ENCODE measurements at regions of chr4 and their contacts with region 1.

Region 1: DNA sequence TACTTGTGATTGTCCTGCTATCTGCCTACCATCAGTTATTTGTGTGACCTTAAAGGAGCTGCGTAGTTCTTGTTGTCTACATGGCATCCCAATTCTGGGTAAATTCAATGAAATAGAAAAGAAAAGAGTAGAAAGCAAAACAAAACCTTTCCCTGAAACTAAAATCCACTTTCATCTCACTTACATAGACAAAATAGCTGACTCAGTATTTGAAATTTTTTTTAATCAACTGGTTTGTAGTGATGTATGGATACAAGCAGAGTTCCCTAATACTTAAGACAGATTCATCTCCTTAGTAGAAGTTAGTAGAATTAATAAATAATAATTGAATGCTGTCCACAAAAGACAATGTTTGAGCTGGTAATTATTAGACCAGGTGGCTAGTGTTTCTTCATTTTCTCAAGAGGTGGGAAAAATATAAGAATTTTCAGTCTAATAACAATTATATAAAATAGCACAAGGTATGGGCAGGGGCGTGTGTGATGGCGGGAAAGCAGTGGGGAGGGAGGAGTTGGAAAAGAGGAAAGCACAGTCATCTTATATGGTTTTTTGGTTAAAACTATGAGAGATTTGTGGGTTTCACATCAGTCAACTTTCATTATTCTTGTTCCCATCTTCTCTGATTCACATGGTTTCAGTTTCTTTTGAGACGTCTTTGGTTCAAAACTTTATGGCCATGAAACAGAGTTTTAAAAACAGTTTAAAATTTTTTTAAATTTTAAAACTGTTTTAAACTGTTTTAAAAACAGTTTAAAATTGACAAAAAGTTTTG is 275.2 kb downstream of the SPRY1 start:
- DNase-seq: no peak
- ATAC-seq: no peak
- H3K4me3 ChIP-seq: peak overlapping the region in 1 of 10 donors; percentile 10
- H3K27ac ChIP-seq: no peak overlapping the region
- H3K4me1 ChIP-seq: peaks cover 0 to 6% (median 0%) of the 10 kb centered on the region in 9 donors
- H3K27me3 ChIP-seq: no peaks in the 10 kb centered on the region
- CTCF ChIP-seq: no peak

Region 2: GRCh38 chr4:123631786-123632692 is 39.8 kb before region 1 on chr4:
- intact Hi-C with region 1: no loop called
- DNase-seq: no peak
- ATAC-seq: no peak
- H3K4me3 ChIP-seq: no peak overlapping the region
- H3K27ac ChIP-seq: no peak overlapping the region
- H3K4me1 ChIP-seq: peaks cover 0 to 10% (median 0%) of the 10 kb centered on the region in 9 donors
- H3K27me3 ChIP-seq: no peaks in the 10 kb centered on the region
- CTCF ChIP-seq: no peak

Region 3: GRCh38 chr4:123767806-123768205 is 96.0 kb after region 1 on chr4:
- intact Hi-C with region 1: no loop called
- DNase-seq: no peak
- ATAC-seq: no peak
- H3K4me3 ChIP-seq: no peak overlapping the region
- H3K27ac ChIP-seq: no peak overlapping the region
- H3K4me1 ChIP-seq: no peaks in the 10 kb centered on the region
- H3K27me3 ChIP-seq: no peaks in the 10 kb centered on the region
- CTCF ChIP-seq: no peak

Region 4: DNA sequence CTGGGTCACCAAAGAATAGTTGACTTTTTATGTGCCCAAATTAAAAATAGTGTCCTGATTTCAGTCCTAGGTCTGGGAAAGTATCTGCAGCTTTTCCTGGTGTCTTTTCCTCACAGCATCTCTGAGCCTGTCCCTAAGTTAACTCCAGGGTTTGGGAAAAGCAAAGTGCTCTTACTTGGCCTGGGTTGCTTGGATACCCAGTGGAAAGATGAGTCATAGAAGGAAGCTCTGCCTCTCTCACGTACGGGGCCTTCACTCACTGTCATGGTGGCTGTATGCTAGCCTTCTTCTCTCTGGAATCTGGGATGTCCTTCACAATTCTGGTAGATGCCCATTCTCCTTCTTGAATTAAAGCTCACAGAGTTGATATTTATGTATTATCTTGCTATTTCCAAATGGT is 433.4 kb after region 1 on chr4:
- intact Hi-C with region 1: loop called in 2 of 10 experiments (anchors 10 kb)
- DNase-seq: no peak
- ATAC-seq: peak in 3 of 8 donors; percentile 31 to 59 (median 51)
- H3K4me3 ChIP-seq: no peak overlapping the region
- H3K27ac ChIP-seq: no peak overlapping the region
- H3K4me1 ChIP-seq: no peaks in the 10 kb centered on the region
- H3K27me3 ChIP-seq: no peaks in the 10 kb centered on the region
- CTCF ChIP-seq: no peak

Measured in heart right ventricle (tissue), 16 donors.